Activated naive CD4-positive, alpha-beta T cell treated with anti-CD3 and anti-CD28 coated beads for 36 hours (primary cell): ENCODE measurements at regions of chr12 and their contacts with region 1.

Region 1: DNA sequence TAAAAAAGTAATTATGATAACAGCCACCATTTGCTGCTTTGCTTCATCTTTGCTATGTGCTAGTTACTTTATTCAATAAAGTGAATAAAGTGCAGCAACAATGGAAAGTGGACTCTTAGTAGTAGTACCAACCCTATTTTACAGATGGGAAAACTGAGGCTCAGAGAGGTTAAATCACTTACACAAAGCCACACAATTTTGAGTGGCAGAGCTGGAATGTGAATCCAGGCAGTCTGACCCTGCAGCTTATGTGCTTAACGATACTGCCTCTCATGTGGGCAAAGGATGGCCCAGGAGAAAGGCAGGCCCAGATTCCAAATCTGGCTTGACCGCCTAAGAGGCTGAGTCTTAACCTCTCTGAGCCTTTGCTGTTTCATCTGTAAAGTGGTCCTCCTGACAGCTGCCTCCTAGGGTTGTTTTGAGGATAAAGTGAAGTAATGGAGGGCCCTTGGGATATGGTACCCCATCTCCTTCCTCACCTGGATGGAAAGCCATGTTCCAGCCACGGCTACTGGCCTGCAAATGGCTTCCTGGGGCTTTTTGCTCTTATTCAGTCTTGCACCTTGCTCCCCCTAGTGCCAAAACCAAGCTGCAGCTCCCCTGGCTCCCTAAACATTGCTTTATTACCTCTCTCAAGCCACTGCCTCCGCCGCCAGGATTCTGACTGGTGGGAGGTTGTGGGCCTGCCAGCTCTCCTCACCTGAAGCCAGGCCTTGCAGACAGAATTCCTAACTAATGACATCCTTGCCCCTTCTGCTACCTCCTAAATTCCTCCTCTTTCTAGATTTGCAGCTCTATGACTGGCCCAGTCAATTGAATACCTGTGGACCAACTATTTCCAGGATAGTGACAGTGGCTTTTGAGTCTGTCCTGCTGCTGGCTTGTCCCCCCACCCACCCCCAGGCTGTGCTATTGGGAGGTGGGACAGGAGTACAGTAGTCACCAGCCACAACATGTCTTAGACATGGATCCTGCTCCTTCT is 283.3 kb upstream of the PWP1 start:
- DNase-seq: peak; percentile 85
- H3K4me3 Mint-ChIP-seq: no peak overlapping the region
- H3K27ac Mint-ChIP-seq: no peak overlapping the region
- H3K4me1 Mint-ChIP-seq: peaks cover 14% of the 10 kb centered on the region
- H3K27me3 Mint-ChIP-seq: no peaks in the 10 kb centered on the region

Region 2: DNA sequence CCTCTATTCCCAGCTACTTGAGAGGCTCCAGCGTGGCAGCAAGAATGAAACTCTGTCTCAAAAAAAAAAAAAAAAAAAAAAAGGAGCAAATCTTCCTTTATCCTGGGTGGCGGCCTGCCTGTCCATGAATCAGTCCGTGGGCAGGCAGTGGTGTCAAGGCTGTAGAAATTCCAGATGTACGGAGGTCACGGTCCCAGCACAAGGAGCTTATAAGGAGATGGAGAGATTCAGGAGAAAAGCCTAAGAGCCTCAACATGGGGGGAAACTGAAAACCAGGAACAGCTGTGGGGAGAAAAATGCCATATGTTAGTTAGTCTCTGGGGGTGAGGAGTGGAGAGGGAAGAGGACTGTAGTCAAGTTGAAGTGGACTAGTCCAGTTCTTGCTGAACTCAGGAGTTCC is 178.5 kb before region 1 on chr12:
- CTCF ChIA-PET with region 1: interaction called, 3 read pairs
- intact Hi-C with region 1: loop called (anchors 5 kb)
- DNase-seq: no peak
- H3K4me3 Mint-ChIP-seq: no peak overlapping the region
- H3K27ac Mint-ChIP-seq: no peak overlapping the region
- H3K4me1 Mint-ChIP-seq: peaks cover 2% of the 10 kb centered on the region
- H3K27me3 Mint-ChIP-seq: peaks cover 13% of the 10 kb centered on the region

Region 3: DNA sequence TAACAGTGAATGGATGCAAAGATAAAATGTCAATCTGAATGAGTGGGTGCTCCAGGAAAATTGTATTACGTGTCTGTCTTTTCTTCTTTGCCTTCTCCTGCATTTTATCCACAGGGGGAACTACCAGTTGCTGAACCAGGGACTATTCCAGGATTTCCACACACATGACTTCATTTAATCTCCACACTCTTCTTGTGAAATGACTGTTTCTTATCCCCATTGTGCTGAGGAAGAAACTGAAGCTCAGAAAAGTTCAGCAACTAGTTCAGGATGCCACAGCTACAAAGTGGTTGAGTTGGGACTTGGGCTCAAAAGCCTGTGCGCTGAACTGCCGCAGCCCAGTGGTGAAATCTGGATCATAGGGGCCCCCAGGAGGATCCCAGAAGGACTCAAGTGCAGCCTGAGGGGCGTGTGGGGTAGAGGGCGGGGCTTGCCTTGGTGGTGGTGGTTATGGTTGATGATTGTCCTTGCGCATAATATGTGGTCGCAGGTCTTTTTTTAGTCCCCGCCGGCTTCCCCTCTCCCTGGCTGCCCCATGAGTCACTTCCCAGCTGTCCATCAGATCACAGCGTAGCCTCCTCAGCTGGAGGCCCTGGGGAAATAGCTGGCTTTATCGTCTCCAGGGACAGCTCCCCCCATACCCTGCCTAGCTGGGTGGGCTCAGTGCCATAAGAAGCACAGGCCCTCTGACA is 73.7 kb before region 1 on chr12:
- CTCF ChIA-PET with region 1: interaction called, 51 read pairs
- intact Hi-C with region 1: no loop called
- DNase-seq: peak; percentile 39
- H3K4me3 Mint-ChIP-seq: no peak overlapping the region
- H3K27ac Mint-ChIP-seq: no peak overlapping the region
- H3K4me1 Mint-ChIP-seq: peaks cover 66% of the 10 kb centered on the region
- H3K27me3 Mint-ChIP-seq: no peaks in the 10 kb centered on the region

Region 4: GRCh38 chr12:107356266-107356936 is 45.9 kb before region 1 on chr12:
- CTCF ChIA-PET with region 1: interaction called, 11 read pairs
- intact Hi-C with region 1: no loop called
- DNase-seq: peak; percentile 16
- H3K4me3 Mint-ChIP-seq: no peak overlapping the region
- H3K27ac Mint-ChIP-seq: no peak overlapping the region
- H3K4me1 Mint-ChIP-seq: peaks cover 50% of the 10 kb centered on the region
- H3K27me3 Mint-ChIP-seq: no peaks in the 10 kb centered on the region

Region 5: GRCh38 chr12:107372229-107372658 is 30.1 kb before region 1 on chr12:
- CTCF ChIA-PET with region 1: interaction called, 14 read pairs
- intact Hi-C with region 1: loop called (anchors 1 kb)
- DNase-seq: peak; percentile 72
- H3K4me3 Mint-ChIP-seq: peak overlapping the region; percentile 32
- H3K27ac Mint-ChIP-seq: peak overlapping the region; percentile 83
- H3K4me1 Mint-ChIP-seq: peaks cover 77% of the 10 kb centered on the region
- H3K27me3 Mint-ChIP-seq: no peaks in the 10 kb centered on the region

Region 6: GRCh38 chr12:107522692-107523477 is 120.6 kb after region 1 on chr12:
- CTCF ChIA-PET with region 1: no interaction called
- intact Hi-C with region 1: no loop called
- DNase-seq: no peak
- H3K4me3 Mint-ChIP-seq: no peak overlapping the region
- H3K27ac Mint-ChIP-seq: no peak overlapping the region
- H3K4me1 Mint-ChIP-seq: no peaks in the 10 kb centered on the region
- H3K27me3 Mint-ChIP-seq: no peaks in the 10 kb centered on the region

Region 7: GRCh38 chr12:107607464-107608392 is 205.4 kb after region 1 on chr12:
- CTCF ChIA-PET with region 1: interaction called, 72 read pairs
- intact Hi-C with region 1: loop called (anchors 1 kb)
- DNase-seq: peak; percentile 87
- H3K4me3 Mint-ChIP-seq: no peak overlapping the region
- H3K27ac Mint-ChIP-seq: no peak overlapping the region
- H3K4me1 Mint-ChIP-seq: no peaks in the 10 kb centered on the region
- H3K27me3 Mint-ChIP-seq: no peaks in the 10 kb centered on the region